Head of caudate nucleus (tissue), 42 donors: ENCODE measurements at regions of chr1 and their contacts with region 1.

Region 1: GRCh38 chr1:173476664-173477285 is 360 bp upstream of the PRDX6 start:
- DNase-seq: peak; percentile 92 to 98 (median 96)

Region 2: GRCh38 chr1:173280899-173281660 is 195.7 kb before region 1 on chr1:
- intact Hi-C with region 1: no loop called
- DNase-seq: no peak

Region 3: GRCh38 chr1:173714759-173715537 is 238.2 kb after region 1 on chr1 and contains the start of gene KLHL20:
- intact Hi-C with region 1: loop called (anchors 5 kb)
- DNase-seq: peak; percentile 69 to 93 (median 83)